Posterior vena cava (tissue), 2 donors: ENCODE measurements at regions of chr3 and their contacts with region 1.

Region 1: DNA sequence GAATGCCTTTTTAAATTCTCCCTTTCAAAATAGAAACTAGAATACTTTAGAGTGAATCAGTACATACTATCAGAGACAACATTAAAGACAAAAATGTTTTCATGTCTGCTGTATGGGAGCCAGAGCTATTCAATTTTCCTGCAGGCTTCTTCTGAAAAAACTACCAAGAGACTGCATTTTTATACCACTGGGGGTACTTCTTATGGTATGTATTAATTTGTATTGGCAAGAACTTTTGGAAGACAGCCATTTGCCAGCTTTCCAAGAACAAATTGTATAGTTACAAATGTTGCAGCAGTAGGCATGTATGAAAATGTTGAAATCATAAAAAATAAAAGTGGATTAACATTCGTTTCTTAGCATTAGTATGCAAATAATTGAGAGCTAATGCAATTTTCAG is 1010.0 kb upstream of the CADM2 start:
- DNase-seq: no peak

Region 2: DNA sequence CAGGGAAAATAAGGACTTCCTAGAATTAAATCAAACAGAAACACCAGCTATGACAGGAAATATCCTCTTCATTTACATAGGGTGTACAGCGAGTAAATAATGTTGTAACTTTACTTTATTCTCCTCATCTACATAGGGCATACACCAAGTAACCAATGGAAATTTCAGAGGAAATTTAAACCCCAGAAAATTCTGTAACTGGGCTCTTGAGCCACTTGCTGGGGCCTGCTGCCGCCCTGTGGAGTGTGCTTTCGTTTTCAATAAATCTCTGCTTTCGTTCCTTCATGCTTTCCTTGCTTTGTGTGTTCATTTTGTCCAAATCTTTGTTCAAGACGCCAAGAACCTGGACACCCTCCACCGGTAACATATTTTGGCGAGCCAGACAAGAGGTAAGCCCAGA is 19.6 kb after region 1 on chr3:
- intact Hi-C with region 1: loop called in 1 of 2 experiments (anchors 2 kb)
- DNase-seq: no peak